OCI-LY7 (cell line): ENCODE measurements at regions of chr5 and their contacts with region 1.

Region 1: DNA sequence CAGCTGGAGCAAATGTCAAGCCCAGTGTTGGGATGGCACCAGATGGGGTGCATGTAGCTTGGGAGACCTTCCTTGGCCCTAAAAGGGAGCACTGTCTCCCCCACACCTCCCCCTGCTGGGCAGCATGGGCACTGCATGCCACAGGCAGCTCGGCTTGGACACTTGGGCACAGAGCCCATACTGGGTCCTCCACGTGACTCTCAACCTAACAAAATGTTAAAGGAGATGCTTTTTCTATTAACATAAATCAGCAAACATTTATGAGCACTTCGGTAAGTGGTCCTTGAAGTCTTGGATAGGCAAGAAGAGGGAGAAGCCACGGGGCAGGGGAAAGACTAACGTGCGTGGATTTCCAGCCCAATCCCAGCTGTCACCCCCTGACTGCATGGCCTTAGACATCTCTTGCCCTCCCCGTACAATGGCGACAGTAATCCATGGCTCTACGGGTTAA is 23.9 kb upstream of the MAPK9 start:
- DNase-seq: peak; percentile 54
- H3K4me3 ChIP-seq: no peak overlapping the region
- H3K27ac ChIP-seq: no peak overlapping the region
- H3K4me1 ChIP-seq: no peaks in the 10 kb centered on the region
- CTCF ChIP-seq: peak; percentile 95

Region 2: DNA sequence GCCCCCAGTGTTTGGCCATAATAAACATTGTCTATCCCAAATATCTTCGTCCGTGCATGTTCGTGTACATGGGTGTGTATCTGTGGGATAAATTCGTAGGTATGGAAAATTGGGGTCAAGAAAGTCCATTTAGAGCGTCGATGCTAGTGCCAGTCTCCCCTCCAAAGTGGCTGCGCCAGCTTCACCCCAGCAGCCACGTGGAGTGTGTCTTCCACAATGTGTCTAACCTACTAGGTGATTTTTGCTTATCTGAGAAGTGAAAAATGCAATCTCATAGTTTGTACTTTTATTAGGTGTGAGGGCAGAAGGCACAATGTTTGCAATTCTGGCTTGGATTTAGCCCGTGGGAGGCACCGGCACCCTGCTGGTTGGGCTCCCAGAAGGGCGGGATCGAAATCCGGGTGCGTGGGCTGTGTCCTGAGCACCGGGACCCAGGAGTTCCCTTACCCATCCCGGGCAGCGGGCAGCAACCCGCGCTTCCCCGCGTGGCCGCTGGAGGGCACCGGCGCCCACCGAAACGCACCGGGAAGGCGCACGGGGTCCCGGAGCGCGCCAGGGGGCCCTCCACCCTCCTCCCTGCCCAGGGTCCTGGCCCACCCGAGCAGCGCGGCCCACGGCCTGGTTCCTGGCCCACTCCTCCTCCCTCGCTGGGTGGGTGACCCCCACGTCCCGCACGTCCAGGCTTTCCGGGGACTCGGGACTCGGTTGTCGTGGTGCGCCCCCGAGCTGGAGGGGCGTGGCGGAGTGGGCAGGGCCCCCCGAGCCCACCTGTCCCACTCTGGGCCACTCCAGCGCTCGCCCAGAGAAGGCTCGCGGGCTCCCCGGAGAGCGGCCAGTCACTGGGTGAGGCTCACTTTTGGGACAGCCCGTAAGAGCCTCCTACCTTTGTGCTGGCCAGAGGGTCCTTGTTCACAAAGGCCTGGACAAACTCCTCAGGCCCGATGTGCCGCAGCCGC is 188.8 kb before region 1 on chr5:
- CTCF ChIA-PET with region 1: no interaction called
- POLR2A ChIA-PET with region 1: no interaction called
- intact Hi-C with region 1: loop called (anchors 2 kb)
- DNase-seq: peak; percentile 13
- H3K4me3 ChIP-seq: no peak overlapping the region
- H3K27ac ChIP-seq: no peak overlapping the region
- H3K4me1 ChIP-seq: no peaks in the 10 kb centered on the region
- CTCF ChIP-seq: peak; percentile 77

Region 3: GRCh38 chr5:180201051-180201987 is 114.5 kb before region 1 on chr5:
- CTCF ChIA-PET with region 1: interaction called, 3 read pairs
- POLR2A ChIA-PET with region 1: no interaction called
- intact Hi-C with region 1: loop called (anchors 1 kb)
- DNase-seq: peak; percentile 22
- H3K4me3 ChIP-seq: no peak overlapping the region
- H3K27ac ChIP-seq: no peak overlapping the region
- H3K4me1 ChIP-seq: no peaks in the 10 kb centered on the region
- CTCF ChIP-seq: peak; percentile 74

Region 4: DNA sequence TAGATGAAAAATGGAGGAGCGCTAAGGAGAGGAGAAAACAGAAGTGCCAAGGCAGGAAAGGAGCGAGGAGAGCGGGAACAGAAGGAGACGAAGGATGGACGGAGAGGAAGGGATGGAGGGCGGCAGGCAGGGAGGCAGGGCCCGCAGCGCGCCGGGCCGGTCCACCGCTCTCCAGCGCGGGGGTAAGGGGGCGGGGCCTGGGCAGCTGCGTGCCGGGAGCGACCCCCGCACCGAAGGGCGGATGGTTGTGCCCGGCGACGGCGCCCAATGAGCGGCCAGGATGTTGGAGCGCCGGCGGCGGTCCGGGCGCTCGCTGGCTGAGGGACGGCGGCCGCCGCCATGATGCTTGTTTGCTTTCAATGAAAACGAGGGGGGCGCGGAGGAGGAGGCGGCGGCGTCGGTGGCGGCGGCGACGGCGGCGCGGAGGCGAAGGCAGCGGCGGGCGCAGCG is 178.3 kb after region 1 on chr5 and contains the start of gene CNOT6:
- CTCF ChIA-PET with region 1: no interaction called
- POLR2A ChIA-PET with region 1: no interaction called
- intact Hi-C with region 1: no loop called
- DNase-seq: peak; percentile 94
- H3K4me3 ChIP-seq: peak within 1 kb of the TSS; percentile 87
- H3K27ac ChIP-seq: peak within 1 kb of the TSS; percentile 66
- H3K4me1 ChIP-seq: peaks cover 14% of the 10 kb centered on the region
- CTCF ChIP-seq: no peak
- total RNA-seq, gene CNOT6: 9.4 and 9.8 TPM in 2 replicates